Naive thymus-derived CD8-positive, alpha-beta T cell (primary cell): ENCODE measurements at regions of chr1 and their contacts with region 1.

Region 1: GRCh38 chr1:151189638-151190445 is at the start of gene VPS72:
- DNase-seq: peak; percentile 75 to 91 (median 82)
- ATAC-seq: peak; percentile 92 to 93
- H3K4me3 Mint-ChIP-seq: peak within 1 kb of the TSS; percentile 91 to 100 (median 99)
- H3K27ac Mint-ChIP-seq: peak within 1 kb of the TSS; percentile 96 to 100 (median 98)
- H3K4me1 Mint-ChIP-seq: peaks cover 14 to 43% (median 33%) of the 10 kb centered on the region in 4 donors
- H3K27me3 Mint-ChIP-seq: no peaks in the 10 kb centered on the region
- polyA plus RNA-seq, gene VPS72: 69.7 to 79.1 (median 70.9) TPM

Region 2: GRCh38 chr1:151118021-151118420 is 71.8 kb before region 1 on chr1:
- POLR2A ChIA-PET with region 1: no interaction called
- DNase-seq: no peak
- ATAC-seq: no peak
- H3K4me3 Mint-ChIP-seq: no peak overlapping the region
- H3K27ac Mint-ChIP-seq: peak overlapping the region in 1 of 10 donors; percentile 25
- H3K4me1 Mint-ChIP-seq: no peaks in the 10 kb centered on the region
- H3K27me3 Mint-ChIP-seq: no peaks in the 10 kb centered on the region

Region 3: GRCh38 chr1:151165738-151166505 is 23.9 kb before region 1 on chr1 and contains the starts of genes LYSMD1 and SCNM1:
- POLR2A ChIA-PET with region 1: interaction called, 27 read pairs
- DNase-seq: peak; percentile 83 to 98 (median 96)
- ATAC-seq: peak; percentile 97 to 98
- H3K4me3 Mint-ChIP-seq: peak within 1 kb of the TSS; percentile 90 to 98 (median 96)
- H3K27ac Mint-ChIP-seq: peak within 1 kb of the TSS; percentile 90 to 99 (median 97)
- H3K4me1 Mint-ChIP-seq: peaks cover 21 to 62% (median 61%) of the 10 kb centered on the region in 4 donors
- H3K27me3 Mint-ChIP-seq: peaks cover 0 to 3% (median 0%) of the 10 kb centered on the region in 5 donors
- polyA plus RNA-seq, gene LYSMD1: 0.23 to 0.30 TPM in 2 of 3 donors, not detected in the other
- polyA plus RNA-seq, gene SCNM1: 53.7 to 74.2 (median 63.5) TPM

Region 4: GRCh38 chr1:151254217-151255213 is 64.7 kb after region 1 on chr1 and contains the start of gene PSMD4:
- POLR2A ChIA-PET with region 1: interaction called, 11 read pairs
- DNase-seq: peak; percentile 78 to 97 (median 92)
- ATAC-seq: peak; percentile 95
- H3K4me3 Mint-ChIP-seq: peak within 1 kb of the TSS; percentile 87 to 99 (median 96)
- H3K27ac Mint-ChIP-seq: peak within 1 kb of the TSS; percentile 93 to 100 (median 96)
- H3K4me1 Mint-ChIP-seq: peaks cover 22 to 41% (median 39%) of the 10 kb centered on the region in 4 donors
- H3K27me3 Mint-ChIP-seq: peaks cover 0 to 2% (median 0%) of the 10 kb centered on the region in 5 donors
- polyA plus RNA-seq, gene PSMD4: 220 to 239 (median 228) TPM